ENCODE measurements at regions of chrX and their contacts with region 1.

Region 1: GRCh38 chrX:31213941-31214340 is 142.1 kb upstream of the FTHL17 start:
- DNase-seq: no peak
- ATAC-seq: peak; percentile 64
- H3K4me3 ChIP-seq: no peak overlapping the region
- H3K27ac ChIP-seq: no peak overlapping the region
- H3K4me1 ChIP-seq: no peaks in the 10 kb centered on the region
- H3K27me3 ChIP-seq: no peaks in the 10 kb centered on the region
- CTCF ChIP-seq: peak; percentile 59 to 62 (median 61)
- EP300 ChIP-seq: no peak
- POLR2A ChIP-seq: no peak
- RAD21 ChIP-seq: peak; percentile 83

Region 2: GRCh38 chrX:31178064-31178768 is 35.7 kb before region 1 on chrX:
- CTCF ChIA-PET with region 1: interaction called, 4 read pairs
- POLR2A ChIA-PET with region 1: no interaction called
- RAD21 ChIA-PET with region 1: interaction called, 5 read pairs
- SMC1A ChIA-PET with region 1: interaction called, 14 read pairs
- in situ Hi-C with region 1: no loop called
- intact Hi-C with region 1: no loop called
- DNase-seq: peak; percentile 42
- ATAC-seq: peak; percentile 82
- H3K4me3 ChIP-seq: no peak overlapping the region
- H3K27ac ChIP-seq: peak overlapping the region; percentile 59
- H3K4me1 ChIP-seq: no peaks in the 10 kb centered on the region
- H3K27me3 ChIP-seq: no peaks in the 10 kb centered on the region
- CTCF ChIP-seq: no peak
- EP300 ChIP-seq: no peak
- POLR2A ChIP-seq: no peak
- RAD21 ChIP-seq: no peak

Region 3: DNA sequence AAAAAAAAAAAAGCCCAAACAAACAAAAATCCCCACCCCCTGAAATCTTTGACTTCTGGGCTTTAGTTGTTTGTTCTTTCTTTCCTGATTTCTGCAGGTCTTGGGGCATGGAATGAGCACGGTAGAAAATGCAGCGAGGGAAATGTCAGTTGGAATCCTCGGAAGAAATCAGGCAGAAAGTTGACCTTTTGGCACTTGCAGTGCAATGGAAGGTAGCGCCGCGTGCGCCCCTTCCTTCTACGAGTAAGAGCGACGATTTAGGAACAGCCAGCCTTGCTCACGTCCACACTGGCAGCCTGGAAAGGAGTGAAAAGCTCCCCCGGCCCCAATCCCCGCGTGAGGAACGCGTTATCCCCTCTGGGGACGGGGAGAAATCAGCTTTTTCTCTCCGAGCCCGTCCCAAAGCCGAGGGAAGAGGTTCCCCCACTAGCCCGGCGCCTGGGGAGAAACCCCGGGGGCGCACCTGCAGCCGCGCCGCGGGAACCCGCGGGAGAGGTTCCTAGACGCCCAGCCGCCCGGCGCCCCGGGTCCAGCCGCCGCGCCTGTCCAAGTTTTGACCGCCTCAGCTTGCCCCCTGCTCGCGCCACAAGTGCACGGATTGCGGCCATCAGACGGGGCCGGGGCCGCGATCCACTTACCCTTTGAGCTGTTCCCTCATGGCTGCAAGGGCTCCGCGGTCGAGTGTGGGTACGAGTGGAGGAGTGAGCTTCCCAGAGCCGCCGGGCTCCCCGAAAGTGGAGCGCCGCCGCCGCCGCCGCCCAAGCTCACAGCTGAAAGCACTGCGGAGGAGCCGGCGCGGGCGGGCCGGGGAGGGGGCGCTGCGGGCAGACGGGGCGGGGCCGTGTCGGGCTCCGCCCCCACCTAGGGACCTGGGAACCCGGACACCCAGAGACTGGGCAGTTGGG is 52.5 kb after region 1 on chrX:
- CTCF ChIA-PET with region 1: interaction called, 20 read pairs
- POLR2A ChIA-PET with region 1: no interaction called
- RAD21 ChIA-PET with region 1: interaction called, 14 read pairs
- SMC1A ChIA-PET with region 1: interaction called, 38 read pairs
- in situ Hi-C with region 1: no loop called
- intact Hi-C with region 1: no loop called
- DNase-seq: no peak
- ATAC-seq: peak; percentile 92
- H3K4me3 ChIP-seq: peak overlapping the region; percentile 70; the same call in 1 of the 2 replicates
- H3K27ac ChIP-seq: peak overlapping the region; percentile 40
- H3K4me1 ChIP-seq: no peaks in the 10 kb centered on the region
- H3K27me3 ChIP-seq: 0 out of 4 replicates have a peak, but pooled peaks cover 0 to 2% of the 10 kb centered on the region in 2 experiments
- CTCF ChIP-seq: no peak
- EP300 ChIP-seq: no peak
- POLR2A ChIP-seq: peak; percentile 57; the same call in 1 of the 2 replicates
- RAD21 ChIP-seq: no peak

Region 4: GRCh38 chrX:31279359-31279758 is 65.4 kb after region 1 on chrX:
- CTCF ChIA-PET with region 1: interaction called, 21 read pairs
- POLR2A ChIA-PET with region 1: no interaction called
- RAD21 ChIA-PET with region 1: interaction called, 11 read pairs
- SMC1A ChIA-PET with region 1: interaction called, 38 read pairs
- in situ Hi-C with region 1: no loop called
- intact Hi-C with region 1: no loop called
- DNase-seq: no peak
- ATAC-seq: peak; percentile 41
- H3K4me3 ChIP-seq: no peak overlapping the region
- H3K27ac ChIP-seq: no peak overlapping the region
- H3K4me1 ChIP-seq: no peaks in the 10 kb centered on the region
- H3K27me3 ChIP-seq: no peaks in the 10 kb centered on the region
- CTCF ChIP-seq: no peak; a peak in 1 of 6 replicates
- EP300 ChIP-seq: no peak
- POLR2A ChIP-seq: no peak
- RAD21 ChIP-seq: 0 out of 2 replicates have a peak, but pooled peaks have one; percentile 9

Region 5: GRCh38 chrX:31293409-31293808 is 79.5 kb after region 1 on chrX:
- CTCF ChIA-PET with region 1: interaction called, 93 read pairs
- POLR2A ChIA-PET with region 1: no interaction called
- RAD21 ChIA-PET with region 1: interaction called, 113 read pairs
- SMC1A ChIA-PET with region 1: interaction called, 138 read pairs
- in situ Hi-C with region 1: no loop called
- intact Hi-C with region 1: loop called (anchors 1 kb)
- DNase-seq: no peak
- ATAC-seq: peak; percentile 90
- H3K4me3 ChIP-seq: no peak overlapping the region
- H3K27ac ChIP-seq: no peak overlapping the region
- H3K4me1 ChIP-seq: no peaks in the 10 kb centered on the region
- H3K27me3 ChIP-seq: no peaks in the 10 kb centered on the region
- CTCF ChIP-seq: peak; percentile 61 to 70 (median 61)
- EP300 ChIP-seq: no peak
- POLR2A ChIP-seq: no peak
- RAD21 ChIP-seq: peak; percentile 84

Region 6: DNA sequence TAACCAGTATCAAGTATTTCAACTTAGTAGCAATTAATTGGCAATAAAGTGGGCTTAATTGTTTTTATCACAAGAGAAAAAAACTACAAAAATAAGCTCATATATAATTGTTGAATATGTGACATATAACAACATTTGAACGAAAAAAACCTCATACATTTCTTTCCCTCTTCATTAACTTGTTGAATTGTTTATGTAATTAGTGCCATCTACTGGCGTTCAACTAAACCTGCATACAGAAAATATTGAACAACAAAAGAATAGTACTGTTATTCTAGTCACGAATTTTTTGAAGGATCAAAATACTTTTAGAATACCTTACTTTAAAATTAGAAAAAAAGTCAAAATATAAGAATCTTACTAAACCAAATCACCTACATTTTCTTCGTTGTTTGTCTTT is 444.4 kb after region 1 on chrX:
- CTCF ChIA-PET with region 1: interaction called, 36 read pairs
- POLR2A ChIA-PET with region 1: no interaction called
- RAD21 ChIA-PET with region 1: interaction called, 24 read pairs
- SMC1A ChIA-PET with region 1: interaction called, 66 read pairs
- in situ Hi-C with region 1: loop called (anchors 10 kb)
- intact Hi-C with region 1: loop called (anchors 2 kb)
- DNase-seq: no peak
- ATAC-seq: peak; percentile 65
- H3K4me3 ChIP-seq: no peak overlapping the region
- H3K27ac ChIP-seq: no peak overlapping the region
- H3K4me1 ChIP-seq: no peaks in the 10 kb centered on the region
- H3K27me3 ChIP-seq: no peaks in the 10 kb centered on the region
- CTCF ChIP-seq: peak; percentile 24 to 61 (median 40); a peak in 4 of 6 replicates
- EP300 ChIP-seq: no peak
- POLR2A ChIP-seq: no peak
- RAD21 ChIP-seq: peak; percentile 64

Measured in GM12878 (cell line).